ENCODE measurements at regions of chr12 and their contacts with region 1.

Region 1: GRCh38 chr12:85866986-85867776 is 6.9 kb upstream of the NTS start:
- DNase-seq: peak; percentile 81
- H3K4me3 ChIP-seq: no peak overlapping the region
- H3K27ac ChIP-seq: no peak overlapping the region
- H3K4me1 ChIP-seq: no peaks in the 10 kb centered on the region
- H3K27me3 ChIP-seq: no peaks in the 10 kb centered on the region
- CTCF ChIP-seq: peak; percentile 57 to 60
- POLR2A ChIP-seq: no peak

Region 2: GRCh38 chr12:85468356-85469157 is 398.6 kb before region 1 on chr12:
- CTCF ChIA-PET with region 1: interaction called, 153 read pairs
- POLR2A ChIA-PET with region 1: no interaction called
- dilution Hi-C with region 1: no loop called
- intact Hi-C with region 1: loop called (anchors 1 kb)
- DNase-seq: peak; percentile 80
- H3K4me3 ChIP-seq: peak overlapping the region in 2 of 3 experiments; percentile 41 to 67
- H3K27ac ChIP-seq: no peak overlapping the region
- H3K4me1 ChIP-seq: no peaks in the 10 kb centered on the region
- H3K27me3 ChIP-seq: peaks cover 0 to 2% of the 10 kb centered on the region in 2 experiments
- CTCF ChIP-seq: peak; percentile 64 to 69
- POLR2A ChIP-seq: no peak

Region 3: DNA sequence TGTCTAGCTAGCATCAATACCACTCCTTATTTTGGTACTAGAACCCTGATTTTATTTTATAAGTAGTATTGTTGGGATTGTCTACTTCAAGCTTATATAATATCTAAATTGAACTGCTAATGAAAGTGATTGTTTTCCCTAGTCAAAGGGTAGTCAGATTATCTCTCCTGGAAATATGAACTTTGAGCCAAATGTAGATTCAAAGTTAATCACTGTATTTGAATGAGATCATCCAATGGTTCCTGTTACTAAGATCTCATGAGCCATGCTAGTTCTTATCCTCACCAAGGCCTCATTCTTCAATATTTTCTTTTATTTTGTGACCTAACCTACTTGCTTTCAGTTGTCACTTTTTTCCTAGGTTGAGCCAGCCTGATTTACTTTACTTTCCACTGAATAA is 307.6 kb before region 1 on chr12:
- CTCF ChIA-PET with region 1: interaction called, 15 read pairs
- POLR2A ChIA-PET with region 1: no interaction called
- dilution Hi-C with region 1: no loop called
- intact Hi-C with region 1: no loop called
- DNase-seq: no peak
- H3K4me3 ChIP-seq: no peak overlapping the region
- H3K27ac ChIP-seq: no peak overlapping the region
- H3K4me1 ChIP-seq: no peaks in the 10 kb centered on the region
- H3K27me3 ChIP-seq: no peaks in the 10 kb centered on the region
- CTCF ChIP-seq: no peak
- POLR2A ChIP-seq: no peak

Region 4: GRCh38 chr12:85626001-85626781 is 241.0 kb before region 1 on chr12:
- CTCF ChIA-PET with region 1: interaction called, 11 read pairs
- POLR2A ChIA-PET with region 1: no interaction called
- dilution Hi-C with region 1: no loop called
- intact Hi-C with region 1: loop called (anchors 1 kb)
- DNase-seq: peak; percentile 95
- H3K4me3 ChIP-seq: no peak overlapping the region
- H3K27ac ChIP-seq: peak overlapping the region; percentile 92
- H3K4me1 ChIP-seq: peaks cover 26% of the 10 kb centered on the region
- H3K27me3 ChIP-seq: no peaks in the 10 kb centered on the region
- CTCF ChIP-seq: no peak
- POLR2A ChIP-seq: peak; percentile 73

Region 5: GRCh38 chr12:85836197-85837090 is 30.7 kb before region 1 on chr12 and contains the start of gene RASSF9:
- CTCF ChIA-PET with region 1: interaction called, 18 read pairs
- POLR2A ChIA-PET with region 1: no interaction called
- dilution Hi-C with region 1: no loop called
- intact Hi-C with region 1: no loop called
- DNase-seq: peak; percentile 84
- H3K4me3 ChIP-seq: peak within 1 kb of the TSS; percentile 5 to 89 (median 39)
- H3K27ac ChIP-seq: peak within 1 kb of the TSS; percentile 49
- H3K4me1 ChIP-seq: peaks cover 15% of the 10 kb centered on the region
- H3K27me3 ChIP-seq: no peaks in the 10 kb centered on the region
- CTCF ChIP-seq: no peak
- POLR2A ChIP-seq: no peak
- total RNA-seq, gene RASSF9: 2.3 and 3.6 TPM in 2 replicates

Region 6: DNA sequence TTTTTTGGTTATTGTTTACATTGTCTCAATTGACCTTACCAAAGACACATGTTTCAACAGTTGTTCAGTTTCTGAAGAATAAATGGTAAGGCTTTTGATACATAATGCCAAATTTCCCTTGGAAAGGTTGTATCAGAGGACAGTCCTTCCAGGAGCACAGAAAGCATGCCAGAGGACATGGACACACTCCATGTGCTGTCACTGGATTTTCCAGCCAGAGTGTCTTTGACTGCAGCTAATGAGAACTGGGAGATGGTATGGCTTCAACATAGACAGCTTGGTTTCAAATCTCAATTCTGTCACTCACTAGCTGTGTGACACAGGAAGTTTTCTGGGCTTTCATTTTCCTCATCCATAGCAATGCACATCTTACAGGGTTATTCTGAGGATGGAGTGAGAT is 27.5 kb after region 1 on chr12:
- CTCF ChIA-PET with region 1: interaction called, 10 read pairs
- POLR2A ChIA-PET with region 1: no interaction called
- dilution Hi-C with region 1: no loop called
- intact Hi-C with region 1: no loop called
- DNase-seq: no peak
- H3K4me3 ChIP-seq: no peak overlapping the region
- H3K27ac ChIP-seq: no peak overlapping the region
- H3K4me1 ChIP-seq: no peaks in the 10 kb centered on the region
- H3K27me3 ChIP-seq: peaks cover 0 to 1% of the 10 kb centered on the region in 2 experiments
- CTCF ChIP-seq: no peak
- POLR2A ChIP-seq: no peak